Activated CD4-positive, alpha-beta memory T cell treated with anti-CD3 and anti-CD28 coated beads for 36 hours (primary cell): ENCODE measurements at regions of chr7 and their contacts with region 1.

Region 1: GRCh38 chr7:92682903-92683539 is 92.8 kb upstream of the FAM133B start:
- DNase-seq: peak; percentile 20
- H3K4me3 Mint-ChIP-seq: no peak overlapping the region
- H3K27ac Mint-ChIP-seq: peak overlapping the region; percentile 87
- H3K4me1 Mint-ChIP-seq: peaks cover 85% of the 10 kb centered on the region
- H3K27me3 Mint-ChIP-seq: no peaks in the 10 kb centered on the region

Region 2: DNA sequence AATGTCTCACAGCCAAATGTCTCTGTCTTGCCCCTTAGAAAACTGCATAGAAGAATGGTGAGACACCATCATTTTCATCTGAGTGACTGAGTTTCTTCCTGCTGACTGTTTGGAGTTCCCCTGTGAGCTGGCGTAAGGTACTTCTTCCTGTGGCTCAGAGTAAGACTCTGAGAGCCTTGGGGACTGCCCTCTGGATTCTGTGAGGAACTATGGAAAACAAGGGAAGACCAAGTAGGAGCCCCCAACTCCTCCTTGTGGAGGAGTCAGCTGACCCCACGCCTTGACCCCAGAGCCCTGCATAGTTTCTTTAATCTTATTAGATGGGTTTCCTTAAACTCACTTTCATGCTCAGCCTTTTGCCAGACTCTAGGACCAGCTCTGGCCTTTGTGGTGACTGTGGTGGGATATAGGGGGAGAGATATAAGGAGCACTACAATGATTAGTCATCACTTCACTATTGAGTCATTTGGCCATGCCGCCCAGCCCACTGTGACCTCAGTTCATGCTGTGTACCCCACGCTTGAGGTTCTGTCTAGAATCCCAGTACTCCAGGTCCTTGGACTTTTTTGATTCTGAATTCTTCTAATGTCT is 41.0 kb before region 1 on chr7:
- CTCF ChIA-PET with region 1: no interaction called
- POLR2A ChIA-PET with region 1: interaction called, 3 read pairs
- intact Hi-C with region 1: loop called (anchors 2 kb)
- DNase-seq: peak; percentile 84
- H3K4me3 Mint-ChIP-seq: peak overlapping the region; percentile 9
- H3K27ac Mint-ChIP-seq: peak overlapping the region; percentile 96
- H3K4me1 Mint-ChIP-seq: peaks cover 86% of the 10 kb centered on the region
- H3K27me3 Mint-ChIP-seq: no peaks in the 10 kb centered on the region

Region 3: GRCh38 chr7:92669616-92670165 is 13.3 kb before region 1 on chr7:
- CTCF ChIA-PET with region 1: no interaction called
- POLR2A ChIA-PET with region 1: no interaction called
- intact Hi-C with region 1: loop called (anchors 1 kb)
- DNase-seq: peak; percentile 26
- H3K4me3 Mint-ChIP-seq: no peak overlapping the region
- H3K27ac Mint-ChIP-seq: peak overlapping the region; percentile 63
- H3K4me1 Mint-ChIP-seq: peaks cover 67% of the 10 kb centered on the region
- H3K27me3 Mint-ChIP-seq: no peaks in the 10 kb centered on the region

Region 4: GRCh38 chr7:92809397-92810241 is 126.6 kb after region 1 on chr7:
- CTCF ChIA-PET with region 1: no interaction called
- POLR2A ChIA-PET with region 1: interaction called, 4 read pairs
- intact Hi-C with region 1: loop called (anchors 1 kb)
- DNase-seq: peak; percentile 83
- H3K4me3 Mint-ChIP-seq: peak overlapping the region; percentile 39
- H3K27ac Mint-ChIP-seq: peak overlapping the region; percentile 89
- H3K4me1 Mint-ChIP-seq: peaks cover 73% of the 10 kb centered on the region
- H3K27me3 Mint-ChIP-seq: no peaks in the 10 kb centered on the region

Region 5: GRCh38 chr7:93902777-93903423 is 1219.9 kb after region 1 on chr7:
- CTCF ChIA-PET with region 1: no interaction called
- POLR2A ChIA-PET with region 1: no interaction called
- intact Hi-C with region 1: no loop called
- DNase-seq: no peak
- H3K4me3 Mint-ChIP-seq: no peak overlapping the region
- H3K27ac Mint-ChIP-seq: no peak overlapping the region
- H3K4me1 Mint-ChIP-seq: no peaks in the 10 kb centered on the region
- H3K27me3 Mint-ChIP-seq: peaks cover 7% of the 10 kb centered on the region